Aorta (tissue), 5 donors: ENCODE measurements at regions of chr12 and their contacts with region 1.

Region 1: GRCh38 chr12:64181504-64182291 is 40.4 kb downstream of the KICS2 start:
- DNase-seq: peak in 1 of 2 donors; percentile 50
- ATAC-seq: peak; percentile 91
- H3K4me3 ChIP-seq: no peak overlapping the region
- H3K27ac ChIP-seq: peak overlapping the region; percentile 45 to 91
- H3K4me1 ChIP-seq: peaks cover 2 to 7% of the 10 kb centered on the region in 2 donors
- H3K27me3 ChIP-seq: no peaks in the 10 kb centered on the region

Region 2: GRCh38 chr12:63843721-63844390 is 337.8 kb before region 1 on chr12:
- intact Hi-C with region 1: loop called (anchors 1 to 5 kb)
- DNase-seq: peak; percentile 94 to 96
- ATAC-seq: peak; percentile 95
- H3K4me3 ChIP-seq: peak overlapping the region; percentile 60 to 84
- H3K27ac ChIP-seq: peak overlapping the region; percentile 57 to 73
- H3K4me1 ChIP-seq: no peaks in the 10 kb centered on the region
- H3K27me3 ChIP-seq: no peaks in the 10 kb centered on the region

Region 3: DNA sequence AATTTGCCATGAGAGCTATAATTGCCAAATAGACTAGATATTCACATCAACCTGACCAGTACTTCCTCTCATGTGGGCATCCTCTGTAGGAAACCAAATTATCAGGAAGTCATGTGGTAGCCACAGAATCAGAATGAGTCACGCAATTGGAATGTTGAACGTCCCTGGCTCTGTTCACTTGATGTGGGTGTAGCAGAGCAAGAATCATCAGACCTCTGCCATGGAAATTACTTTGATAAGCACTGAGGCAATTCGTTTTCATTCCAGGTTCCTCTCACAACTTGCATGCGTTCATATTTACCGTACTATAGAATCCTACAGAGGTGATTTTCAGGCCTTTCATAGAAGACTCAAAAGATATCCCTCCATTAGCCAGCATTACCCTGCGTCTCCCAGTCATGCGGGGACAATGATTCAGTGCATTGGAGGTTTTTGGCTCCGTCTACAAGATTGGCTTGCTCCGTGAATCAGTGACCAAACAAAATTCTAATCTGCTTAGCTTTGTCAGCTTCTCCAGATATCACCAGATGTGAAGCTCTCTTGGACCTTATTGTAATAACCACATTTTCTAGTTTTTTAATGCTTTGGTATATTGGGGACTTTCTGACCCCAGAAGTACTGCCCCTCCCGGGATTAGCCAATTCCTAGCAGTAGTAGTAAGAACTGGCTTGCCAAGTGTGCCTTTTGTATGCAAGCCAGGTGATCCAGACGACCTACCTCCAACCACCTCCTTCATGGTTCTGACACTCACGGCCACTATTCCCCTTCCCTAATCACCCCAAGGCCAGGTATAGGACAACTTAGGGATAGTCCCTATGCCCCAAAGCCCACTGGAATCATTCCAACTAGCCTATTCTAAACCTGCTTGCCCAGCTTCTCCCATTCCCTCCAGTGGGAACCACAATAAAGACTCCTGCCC is 93.0 kb before region 1 on chr12:
- intact Hi-C with region 1: loop called (anchors 5 to 10 kb)
- DNase-seq: peak in 1 of 2 donors; percentile 70
- ATAC-seq: peak; percentile 90
- H3K4me3 ChIP-seq: no peak overlapping the region
- H3K27ac ChIP-seq: peak overlapping the region in 1 of 2 donors; percentile 56
- H3K4me1 ChIP-seq: peaks cover 3 to 6% of the 10 kb centered on the region in 2 donors
- H3K27me3 ChIP-seq: no peaks in the 10 kb centered on the region

Region 4: DNA sequence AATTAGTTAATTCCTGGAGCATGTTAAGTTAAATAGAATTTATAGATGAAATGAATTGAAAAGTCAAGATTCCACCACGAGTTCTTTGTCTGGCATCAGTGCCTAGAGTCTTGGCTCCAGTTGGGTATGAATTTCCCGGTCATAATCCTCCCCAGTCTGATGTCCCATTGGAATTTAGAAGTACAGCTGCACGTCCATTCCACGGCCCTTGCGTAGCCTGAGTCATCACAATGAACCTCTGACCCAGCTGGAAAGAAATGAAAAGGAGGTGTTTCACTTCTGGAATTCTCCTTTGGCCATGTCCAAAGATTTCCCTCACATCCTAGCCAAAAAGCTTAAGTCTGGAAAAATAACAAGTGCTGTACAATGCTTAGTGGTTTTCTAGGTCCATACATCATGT is 82.3 kb before region 1 on chr12:
- intact Hi-C with region 1: loop called in 1 of 2 experiments (anchors 10 kb)
- DNase-seq: no peak
- ATAC-seq: no peak
- H3K4me3 ChIP-seq: no peak overlapping the region
- H3K27ac ChIP-seq: no peak overlapping the region
- H3K4me1 ChIP-seq: no peaks in the 10 kb centered on the region
- H3K27me3 ChIP-seq: no peaks in the 10 kb centered on the region

Region 5: GRCh38 chr12:64137117-64137516 is 44.6 kb before region 1 on chr12:
- intact Hi-C with region 1: no loop called
- DNase-seq: no peak
- ATAC-seq: no peak
- H3K4me3 ChIP-seq: no peak overlapping the region
- H3K27ac ChIP-seq: no peak overlapping the region
- H3K4me1 ChIP-seq: no peaks in the 10 kb centered on the region
- H3K27me3 ChIP-seq: no peaks in the 10 kb centered on the region

Region 6: GRCh38 chr12:64222009-64222765 is 40.5 kb after region 1 on chr12 and contains the start of gene KICS2:
- intact Hi-C with region 1: loop called in 1 of 2 experiments (anchors 5 kb)
- DNase-seq: peak; percentile 96 to 97
- ATAC-seq: peak; percentile 100
- H3K4me3 ChIP-seq: peak within 1 kb of the TSS; percentile 80 to 89
- H3K27ac ChIP-seq: peak within 1 kb of the TSS; percentile 65 to 91
- H3K4me1 ChIP-seq: peaks cover 0 to 2% of the 10 kb centered on the region in 2 donors
- H3K27me3 ChIP-seq: no peaks in the 10 kb centered on the region
- total RNA-seq, gene KICS2: 5.6 to 6.2 TPM

Region 7: DNA sequence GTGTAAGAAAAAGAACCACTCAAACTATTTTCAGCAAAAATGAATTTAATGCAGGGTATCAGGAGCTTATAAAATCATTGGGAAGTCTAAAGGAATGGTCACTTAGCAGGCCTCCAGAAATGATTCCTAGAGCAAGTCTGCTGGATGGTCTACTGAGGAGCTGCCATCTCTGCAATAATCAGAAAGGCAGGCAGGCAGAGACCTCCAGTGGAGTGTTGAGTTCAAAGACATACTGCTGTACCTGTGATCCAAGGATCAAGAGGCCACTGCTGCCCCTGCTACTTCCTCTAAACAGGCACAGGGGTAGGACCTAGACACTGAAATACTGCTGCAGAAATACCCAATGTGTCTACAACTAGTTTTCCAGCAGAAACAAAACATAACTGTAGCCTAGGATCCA is 54.9 kb after region 1 on chr12:
- intact Hi-C with region 1: loop called in 1 of 2 experiments (anchors 10 kb)
- DNase-seq: no peak
- ATAC-seq: no peak
- H3K4me3 ChIP-seq: no peak overlapping the region
- H3K27ac ChIP-seq: no peak overlapping the region
- H3K4me1 ChIP-seq: no peaks in the 10 kb centered on the region
- H3K27me3 ChIP-seq: no peaks in the 10 kb centered on the region

Region 8: DNA sequence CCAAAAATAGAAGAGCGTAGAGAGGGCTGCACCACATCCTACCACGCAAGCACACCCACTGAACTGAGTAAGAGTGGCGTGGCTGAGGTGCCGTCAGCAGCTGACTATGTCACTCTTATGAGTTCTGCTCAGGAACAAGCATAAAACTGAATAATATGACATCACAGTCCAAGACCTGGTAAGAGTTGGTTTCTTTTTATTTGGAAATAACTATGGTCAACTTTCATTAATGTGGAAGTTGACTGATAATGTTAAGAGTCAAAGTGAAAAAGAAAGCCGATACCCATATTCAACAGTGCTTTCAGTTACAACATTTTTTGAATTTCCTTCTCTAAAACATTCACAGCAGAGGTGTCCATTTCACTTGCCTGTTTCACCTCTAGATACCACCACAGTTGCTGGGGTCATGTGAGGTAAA is 532.9 kb after region 1 on chr12:
- intact Hi-C with region 1: no loop called
- DNase-seq: no peak
- ATAC-seq: no peak
- H3K4me3 ChIP-seq: no peak overlapping the region
- H3K27ac ChIP-seq: no peak overlapping the region
- H3K4me1 ChIP-seq: no peaks in the 10 kb centered on the region
- H3K27me3 ChIP-seq: no peaks in the 10 kb centered on the region